GM13976 (cell line): ENCODE measurements at regions of chrX and their contacts with region 1.

Region 1: GRCh38 chrX:130916636-130917422 is 13.8 kb upstream of the ENOX2 start:
- DNase-seq: peak; percentile 51
- CTCF ChIP-seq: peak; percentile 74

Region 2: DNA sequence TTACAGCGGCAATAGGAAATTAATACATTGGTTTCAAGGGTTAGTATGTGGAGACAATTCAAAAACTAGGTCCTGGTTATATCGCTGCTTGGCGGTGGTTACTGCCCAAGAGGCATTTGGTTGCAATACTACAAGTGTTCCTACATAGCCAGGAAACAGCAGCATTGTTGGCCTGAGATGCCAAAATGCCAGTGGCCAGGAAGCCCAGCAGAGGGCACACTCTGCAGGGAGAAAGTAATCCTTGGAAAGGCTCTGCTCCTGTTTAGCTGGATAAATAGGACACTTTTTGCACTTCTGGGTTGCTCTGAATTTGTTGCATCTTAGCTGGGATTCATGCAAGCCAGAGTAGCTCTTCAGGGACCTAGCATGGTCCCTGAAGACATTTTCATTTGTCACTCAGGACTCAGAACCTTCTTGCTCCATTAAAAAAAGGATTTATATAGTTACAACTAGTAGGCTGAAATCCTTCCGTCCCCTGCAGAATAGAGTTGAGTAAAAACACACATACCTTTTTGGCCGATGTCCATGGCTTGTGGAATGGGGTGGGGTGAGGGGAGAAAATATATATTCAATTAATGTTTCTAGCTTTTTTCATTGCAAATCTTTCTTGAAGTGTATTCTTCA is 523.3 kb before region 1 on chrX:
- in situ Hi-C with region 1: loop called (anchors 10 kb)
- DNase-seq: no peak
- CTCF ChIP-seq: peak; percentile 31

Region 3: DNA sequence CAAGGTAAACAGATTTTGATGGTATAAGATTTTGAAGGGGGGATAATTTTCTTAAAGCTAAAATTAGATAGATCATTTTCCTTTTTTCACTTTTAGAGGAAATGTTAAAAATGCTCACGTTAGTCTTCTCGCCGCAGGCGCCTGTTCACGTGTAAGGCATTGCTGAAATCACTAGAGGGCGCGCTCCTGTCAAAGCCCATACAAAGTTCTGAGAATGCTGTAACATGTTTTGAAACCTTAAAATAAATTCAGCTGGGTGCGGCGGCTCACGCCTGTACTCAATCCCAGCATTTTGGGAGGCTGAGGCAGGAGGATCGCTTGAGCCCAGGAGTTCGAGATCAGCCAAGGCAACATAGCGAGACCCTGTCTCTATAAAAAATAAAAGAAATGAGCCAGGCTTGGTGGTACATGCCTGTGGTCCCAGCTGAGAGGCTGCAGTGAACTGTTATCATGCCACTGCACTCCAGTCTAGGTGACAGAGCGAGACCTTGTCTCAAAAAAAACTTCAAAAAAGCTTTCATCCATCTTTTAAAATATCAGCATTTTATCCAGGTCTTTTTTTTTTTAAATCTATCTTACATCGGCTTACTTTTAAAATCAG is 377.0 kb before region 1 on chrX:
- in situ Hi-C with region 1: loop called (anchors 10 kb)
- DNase-seq: peak; percentile 42
- CTCF ChIP-seq: peak; percentile 66